Posterior cingulate gyrus (tissue), 11 donors: ENCODE measurements at regions of chr1 and their contacts with region 1.

Region 1: DNA sequence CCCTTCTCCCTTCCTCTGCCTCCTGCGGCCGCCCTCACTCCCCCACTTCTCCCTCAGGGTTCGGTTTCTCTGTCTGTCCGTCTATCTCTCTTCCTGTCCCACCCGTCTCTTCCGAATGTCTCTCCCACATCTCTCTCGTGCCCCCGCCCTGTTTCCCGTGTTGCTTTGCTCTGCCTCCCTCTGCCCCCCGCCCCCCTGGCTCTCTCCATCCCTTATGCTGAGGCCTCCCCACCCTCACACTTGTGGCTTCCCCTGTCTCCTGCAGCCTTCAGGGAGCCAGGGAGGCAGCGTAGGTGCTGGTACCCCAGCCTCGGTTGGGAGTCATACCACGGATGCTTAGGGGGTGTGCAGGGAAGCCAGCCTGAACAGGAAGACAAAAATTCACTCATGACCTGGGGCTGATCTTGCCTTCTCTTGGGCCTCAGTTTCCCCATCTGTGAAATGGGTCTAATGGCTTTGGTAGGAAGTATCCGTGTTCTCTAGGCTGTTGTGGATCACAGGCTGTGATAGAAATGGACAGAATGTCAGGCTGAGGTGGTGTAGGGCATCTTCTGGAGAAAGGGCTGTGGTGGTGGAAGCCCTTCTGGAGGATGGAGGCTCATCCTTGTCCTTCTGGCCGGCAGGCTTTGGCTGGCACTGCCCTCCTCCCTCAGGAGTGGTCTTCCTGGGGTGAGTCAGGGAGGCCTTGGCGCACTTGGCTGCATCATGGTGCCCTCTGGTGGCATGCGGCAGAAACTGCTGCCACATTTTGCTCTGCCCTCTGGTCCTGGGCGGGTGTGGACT is 55.5 kb downstream of the FOXO6 start:
- DNase-seq: peak in 9 of 10 donors; percentile 41 to 95 (median 70)

Region 2: DNA sequence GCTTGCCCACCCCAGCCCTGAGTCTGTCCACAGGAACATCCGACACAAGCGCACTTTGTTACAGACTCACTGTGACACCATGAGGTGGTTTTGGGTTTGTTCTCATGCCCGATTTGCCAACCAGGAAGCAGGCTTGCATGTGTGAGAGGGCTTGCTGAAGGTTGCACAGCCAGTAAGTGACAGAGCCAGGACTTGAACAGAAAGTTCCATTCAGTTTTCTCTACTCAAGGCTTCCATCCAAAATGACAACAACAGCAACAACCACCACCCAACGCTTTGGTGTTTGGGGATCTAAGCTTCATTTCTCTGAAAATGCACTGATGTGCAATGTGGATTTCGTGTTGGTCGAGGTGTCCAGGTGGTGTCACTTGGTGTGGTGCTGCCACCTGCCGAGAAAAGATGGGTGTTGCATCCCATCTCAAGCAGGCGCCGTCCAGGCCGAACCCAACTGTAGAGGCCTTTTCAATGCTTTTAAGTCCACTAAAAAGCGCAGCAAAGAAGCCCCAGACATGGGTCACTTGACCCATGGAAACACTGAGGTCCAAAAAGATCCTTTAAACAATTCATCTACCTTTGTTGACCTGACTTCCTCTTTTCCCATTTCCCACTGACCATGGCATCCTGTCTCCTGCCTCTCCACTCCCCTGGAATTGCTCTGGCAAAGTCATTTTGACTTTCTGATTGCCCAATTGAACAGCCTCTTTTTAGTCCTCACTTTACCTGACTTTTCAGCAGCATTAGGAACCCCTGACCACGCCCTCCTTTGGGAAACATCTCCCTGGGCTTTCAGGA is 566.7 kb before region 1 on chr1:
- intact Hi-C with region 1: no loop called
- DNase-seq: peak; percentile 61 to 96 (median 78)

Region 3: DNA sequence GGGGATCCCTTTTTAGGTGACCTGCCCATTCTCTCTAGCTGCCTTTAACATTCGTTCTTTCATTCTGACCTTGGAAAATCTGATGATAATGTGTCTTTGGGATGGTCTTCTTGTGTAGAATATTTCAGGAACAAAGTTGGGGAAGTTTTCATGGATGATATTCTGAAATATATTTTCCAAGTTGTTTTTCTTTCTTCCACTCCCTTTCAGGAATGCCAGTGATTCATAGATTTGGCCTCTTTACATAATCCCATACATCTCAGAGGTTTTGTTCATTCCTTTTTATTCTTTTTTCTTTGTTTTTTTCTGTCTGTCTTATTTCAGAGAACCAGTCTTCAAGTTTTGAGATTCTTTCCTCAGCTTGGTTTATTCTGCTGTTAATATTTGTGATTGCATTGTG is 160.8 kb before region 1 on chr1:
- intact Hi-C with region 1: no loop called
- DNase-seq: no peak

Region 4: GRCh38 chr1:41268154-41268770 is 148.5 kb before region 1 on chr1:
- intact Hi-C with region 1: loop called (anchors 1 kb)
- DNase-seq: peak; percentile 67 to 97 (median 84)

Region 5: GRCh38 chr1:41282679-41283317 is 133.9 kb before region 1 on chr1:
- intact Hi-C with region 1: loop called (anchors 1 kb)
- DNase-seq: peak in 9 of 10 donors; percentile 32 to 90 (median 53)

Region 6: DNA sequence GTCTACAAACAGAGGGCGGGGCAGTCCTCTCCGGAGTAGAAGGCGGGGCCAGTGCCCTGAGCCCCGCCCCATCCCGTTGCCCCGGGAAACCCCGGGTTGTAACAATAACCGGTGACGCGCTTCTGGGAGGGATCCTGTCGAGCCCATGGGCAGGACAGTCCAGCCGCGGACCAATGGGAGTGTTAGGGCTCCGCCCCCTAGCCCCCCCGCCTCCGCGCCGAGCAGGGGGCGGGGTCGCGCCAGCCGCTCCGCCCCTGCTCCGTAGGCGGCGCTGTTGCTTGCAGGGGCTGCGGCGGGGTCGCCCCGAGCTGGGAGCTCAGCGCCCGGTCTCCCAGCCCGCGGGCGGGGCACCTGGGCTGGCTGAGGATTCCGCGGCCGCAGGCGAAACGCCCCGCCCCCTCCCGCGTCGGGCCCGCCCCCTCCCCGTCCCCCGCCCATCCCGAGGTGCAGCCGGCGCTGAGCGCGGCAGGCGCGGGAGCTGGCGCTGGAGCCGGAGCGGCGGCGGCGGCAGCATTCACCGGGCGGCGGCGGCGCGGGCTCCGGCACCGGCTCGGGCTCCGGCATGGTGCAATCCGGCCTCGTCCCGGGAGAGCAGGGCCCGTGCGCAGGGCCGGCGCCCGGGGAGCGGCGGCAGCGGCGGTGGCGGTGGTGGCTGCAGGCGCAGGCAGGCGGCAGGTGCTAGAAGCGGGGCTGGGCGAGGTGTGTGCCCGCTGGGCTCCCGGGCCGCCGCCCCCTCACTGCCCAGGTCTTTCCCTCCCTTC is 55.6 kb before region 1 on chr1 and contains the start of gene FOXO6:
- intact Hi-C with region 1: loop called (anchors 5 kb)
- DNase-seq: peak; percentile 94 to 100 (median 99)